ENCODE measurements at regions of chr2 and their contacts with region 1.

Region 1: GRCh38 chr2:205766779-205767359 is 84.6 kb downstream of the NRP2 start:
- DNase-seq: no peak
- H3K4me3 ChIP-seq: no peak overlapping the region
- H3K27ac ChIP-seq: peak overlapping the region in 2 of 4 donors; percentile 43 to 72
- H3K4me1 ChIP-seq: peaks cover 9 to 62% (median 34%) of the 10 kb centered on the region in 3 donors
- H3K27me3 ChIP-seq: no peaks in the 10 kb centered on the region
- CTCF ChIP-seq: peak; percentile 52 to 89 (median 84)
- POLR2A ChIP-seq: no peak

Region 2: GRCh38 chr2:205885492-205886099 is 118.7 kb after region 1 on chr2:
- intact Hi-C with region 1: loop called (anchors 5 kb)
- DNase-seq: no peak
- H3K4me3 ChIP-seq: no peak overlapping the region
- H3K27ac ChIP-seq: no peak overlapping the region
- H3K4me1 ChIP-seq: peaks cover 0 to 11% (median 0%) of the 10 kb centered on the region in 3 donors
- H3K27me3 ChIP-seq: no peaks in the 10 kb centered on the region
- CTCF ChIP-seq: peak; percentile 52 to 93 (median 90)
- POLR2A ChIP-seq: no peak

Region 3: GRCh38 chr2:206031162-206031784 is 264.4 kb after region 1 on chr2:
- intact Hi-C with region 1: no loop called
- DNase-seq: no peak
- H3K4me3 ChIP-seq: no peak overlapping the region
- H3K27ac ChIP-seq: no peak overlapping the region
- H3K4me1 ChIP-seq: peaks cover 0 to 10% (median 0%) of the 10 kb centered on the region in 3 donors
- H3K27me3 ChIP-seq: no peaks in the 10 kb centered on the region
- CTCF ChIP-seq: no peak
- POLR2A ChIP-seq: no peak

Region 4: DNA sequence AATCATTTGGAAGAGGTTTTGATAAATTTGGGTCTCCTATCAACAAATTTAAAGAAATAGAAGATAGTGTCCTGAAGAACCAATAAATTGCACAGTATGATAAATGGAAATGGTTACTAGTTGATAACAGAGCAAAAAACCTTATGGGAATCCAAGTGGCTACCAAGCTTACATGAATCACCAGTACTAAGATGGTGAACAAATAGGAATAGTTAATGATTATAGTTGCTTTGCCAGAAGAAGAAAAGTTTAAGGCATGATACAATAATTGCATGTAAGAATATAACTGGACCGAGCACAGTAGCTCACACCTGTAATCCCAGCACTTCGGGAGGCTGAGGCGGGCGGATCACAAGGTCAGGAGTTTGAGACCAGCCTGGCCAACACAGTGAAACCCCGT is 338.7 kb after region 1 on chr2:
- intact Hi-C with region 1: no loop called
- DNase-seq: no peak
- H3K4me3 ChIP-seq: no peak overlapping the region
- H3K27ac ChIP-seq: no peak overlapping the region
- H3K4me1 ChIP-seq: no peaks in the 10 kb centered on the region
- H3K27me3 ChIP-seq: no peaks in the 10 kb centered on the region
- CTCF ChIP-seq: no peak
- POLR2A ChIP-seq: no peak

Measured in esophagus squamous epithelium (tissue), 5 donors.